ENCODE measurements at regions of chr7 and their contacts with region 1.

Region 1: DNA sequence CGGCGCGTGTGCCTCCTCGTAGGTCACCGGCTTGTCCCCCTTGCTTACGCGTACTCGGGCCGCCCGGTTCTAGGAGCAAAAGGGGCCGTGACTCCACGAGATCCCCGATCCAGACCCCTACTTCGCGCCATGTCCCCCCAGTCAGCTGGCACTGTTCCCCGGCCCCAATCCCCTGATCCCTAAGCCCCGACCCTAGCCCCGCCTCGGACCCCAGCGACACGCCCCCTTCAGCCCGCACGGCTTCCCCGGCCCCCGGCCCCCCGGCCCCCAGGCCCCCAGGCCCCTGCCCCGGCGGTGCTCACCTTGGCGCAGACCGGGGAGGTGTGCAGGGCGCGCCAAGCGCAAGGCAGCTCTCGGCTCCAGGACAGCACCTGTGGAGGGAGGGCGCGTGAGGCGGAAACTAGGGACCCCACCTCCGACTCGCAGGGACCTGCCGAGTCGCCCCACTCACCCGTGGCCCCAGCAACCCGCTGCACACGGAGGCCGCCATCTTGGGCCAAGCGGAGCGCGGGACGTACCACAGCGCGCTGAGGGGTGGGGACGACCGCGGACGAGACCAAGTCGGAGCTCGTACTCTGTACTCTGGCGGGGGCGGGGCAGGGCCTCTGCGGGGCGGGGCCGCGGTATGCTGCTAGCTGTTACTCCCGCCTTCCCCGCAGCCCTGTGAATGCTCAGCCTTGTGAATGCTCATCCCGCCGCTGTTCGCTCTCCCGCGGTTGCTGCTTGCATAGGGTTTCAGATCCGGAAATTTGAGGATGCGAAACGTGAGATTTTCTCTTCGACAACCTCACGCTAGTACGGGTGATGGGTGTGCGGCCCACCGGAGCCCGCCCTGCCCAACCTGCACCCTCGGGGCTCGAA is at the start of gene MRPS24:
- DNase-seq: peak; percentile 95 to 97
- ATAC-seq: peak; percentile 96 to 99 (median 98)
- H3K4me3 ChIP-seq: peak within 1 kb of the TSS; percentile 53 to 86 (median 68)
- H3K27ac ChIP-seq: peak within 1 kb of the TSS; percentile 67 to 90 (median 84)
- H3K4me1 ChIP-seq: peaks cover 8 to 49% (median 28%) of the 10 kb centered on the region in 9 donors
- H3K27me3 ChIP-seq: no peaks in the 10 kb centered on the region
- CTCF ChIP-seq: no peak
- total RNA-seq, gene MRPS24: 124 to 197 (median 154) TPM

Region 2: DNA sequence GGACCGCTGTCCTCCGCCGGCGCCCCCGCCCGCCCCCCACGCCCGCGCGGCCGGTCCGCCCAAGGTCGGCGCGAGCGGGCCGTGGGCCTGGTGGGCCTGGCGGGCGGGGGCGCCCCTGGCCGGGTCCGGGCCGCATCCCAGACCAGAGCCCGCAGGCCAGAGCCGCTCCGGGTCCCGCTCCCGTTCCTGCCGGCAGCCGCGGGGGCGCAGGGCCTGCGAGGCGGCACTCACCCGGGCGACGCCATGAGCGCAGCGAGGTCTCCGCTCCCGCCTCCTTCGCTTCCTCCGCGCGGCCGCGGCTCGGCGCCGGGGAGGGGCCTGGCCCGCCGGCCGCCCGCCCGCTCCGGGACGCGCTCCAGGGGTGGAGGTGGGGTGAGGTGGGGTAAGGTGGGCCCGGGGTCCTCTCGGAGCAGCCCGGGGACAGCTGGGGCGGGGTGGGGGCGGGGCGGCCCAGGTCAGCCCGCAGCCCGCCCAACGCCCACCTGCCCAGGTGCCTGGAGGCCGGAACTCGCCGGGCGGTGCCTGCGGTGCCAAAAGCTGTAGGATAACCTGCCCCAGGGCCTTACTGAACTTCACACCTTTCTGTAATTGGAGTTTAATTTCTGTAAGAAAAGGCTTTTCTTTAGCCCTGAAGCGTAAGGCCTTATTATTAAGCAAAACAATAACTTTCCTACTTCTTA is 37.2 kb after region 1 on chr7 and contains the start of gene URGCP:
- intact Hi-C with region 1: loop called in 1 of 10 experiments (anchors 1 kb)
- DNase-seq: peak; percentile 44 to 71
- ATAC-seq: peak; percentile 48 to 92 (median 77)
- H3K4me3 ChIP-seq: peak within 1 kb of the TSS; percentile 66 to 87 (median 76)
- H3K27ac ChIP-seq: peak within 1 kb of the TSS; percentile 87 to 95 (median 91)
- H3K4me1 ChIP-seq: peaks cover 11 to 40% (median 26%) of the 10 kb centered on the region in 9 donors
- H3K27me3 ChIP-seq: no peaks in the 10 kb centered on the region
- CTCF ChIP-seq: no peak
- total RNA-seq, gene URGCP: 34.6 to 46.3 (median 40.0) TPM

Region 3: DNA sequence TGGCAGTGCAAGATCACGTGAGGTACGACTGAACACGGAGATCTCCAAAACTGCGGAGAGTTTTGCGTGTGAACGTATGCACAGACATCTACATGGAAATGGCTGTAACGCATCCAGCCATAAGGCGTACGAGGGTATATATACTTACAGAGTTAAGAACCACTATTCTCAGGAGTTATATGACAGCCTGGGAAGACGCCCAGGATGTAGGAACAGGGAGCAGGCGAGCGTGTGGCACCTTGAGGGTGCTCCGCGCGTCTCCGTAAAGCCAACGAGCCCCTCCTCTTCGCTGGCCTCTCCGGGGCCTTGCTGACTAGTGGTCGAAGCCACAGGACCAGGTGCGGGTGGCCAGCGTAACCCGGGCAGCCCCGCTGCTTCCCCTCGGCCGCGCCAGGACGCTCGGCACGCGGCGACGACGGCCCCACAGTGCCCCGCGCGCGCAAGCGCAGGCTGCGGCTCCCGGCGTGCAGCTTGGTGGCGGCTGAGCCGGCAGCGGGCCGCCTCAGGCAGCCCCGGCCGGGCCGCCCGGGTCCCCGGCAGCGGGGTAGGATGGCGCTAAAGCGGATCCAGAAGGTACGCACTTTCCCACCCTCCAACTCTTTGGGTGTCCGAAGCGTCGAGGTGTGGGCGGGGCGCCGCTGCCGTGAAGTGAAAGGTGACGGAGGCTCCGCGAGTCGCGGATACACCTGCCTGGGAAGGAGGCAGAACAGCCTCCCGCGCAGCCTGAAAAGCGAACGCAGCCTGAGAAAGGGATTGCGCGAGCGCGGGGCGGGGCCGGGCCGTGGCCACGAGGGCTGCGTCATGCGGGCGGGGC is 57.0 kb after region 1 on chr7 and contains the start of gene UBE2D4:
- intact Hi-C with region 1: loop called in 2 of 10 experiments (anchors 2 to 5 kb)
- DNase-seq: peak; percentile 81 to 87
- ATAC-seq: peak; percentile 94 to 97 (median 96)
- H3K4me3 ChIP-seq: peak within 1 kb of the TSS; percentile 43 to 95 (median 71)
- H3K27ac ChIP-seq: peak within 1 kb of the TSS; percentile 74 to 99 (median 93)
- H3K4me1 ChIP-seq: peaks cover 0 to 20% (median 16%) of the 10 kb centered on the region in 9 donors
- H3K27me3 ChIP-seq: no peaks in the 10 kb centered on the region
- CTCF ChIP-seq: no peak
- total RNA-seq, gene UBE2D4: 34.4 to 56.1 (median 44.6) TPM

Region 4: DNA sequence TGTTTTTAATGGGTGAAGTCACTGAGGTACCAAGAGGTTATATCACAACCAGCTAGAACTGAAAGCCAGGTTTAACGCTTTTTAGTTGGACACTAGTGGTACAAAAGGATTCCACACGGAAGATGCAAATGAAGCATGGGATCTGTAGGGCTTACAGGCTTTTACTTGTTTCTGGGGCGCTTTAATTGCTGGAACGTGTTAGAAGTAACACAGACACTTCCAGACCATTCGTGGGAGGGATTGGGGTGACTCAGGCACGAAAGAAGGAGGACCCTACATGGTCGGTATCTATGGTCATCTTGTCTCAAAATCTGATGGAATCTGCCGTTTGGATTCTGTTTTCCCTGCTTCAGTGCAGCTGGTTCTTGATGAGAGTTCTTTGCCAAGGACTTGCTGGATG is 332.6 kb after region 1 on chr7:
- intact Hi-C with region 1: no loop called
- DNase-seq: no peak
- ATAC-seq: no peak
- H3K4me3 ChIP-seq: peak overlapping the region in 9 of 10 donors; percentile 63 to 96 (median 90)
- H3K27ac ChIP-seq: peak overlapping the region in 2 of 10 donors; percentile 91
- H3K4me1 ChIP-seq: peaks cover 4 to 31% (median 14%) of the 10 kb centered on the region in 9 donors
- H3K27me3 ChIP-seq: peaks cover 0 to 8% (median 0%) of the 10 kb centered on the region in 7 donors
- CTCF ChIP-seq: no peak